Heart left ventricle (tissue), 16 donors: ENCODE measurements at regions of chr9 and their contacts with region 1.

Region 1: GRCh38 chr9:96449845-96450612 is at the start of gene HABP4:
- DNase-seq: peak; percentile 97 to 99 (median 98)
- ATAC-seq: peak; percentile 99 to 100 (median 99)
- H3K4me3 ChIP-seq: peak within 1 kb of the TSS; percentile 53 to 95 (median 82)
- H3K27ac ChIP-seq: peak within 1 kb of the TSS; percentile 52 to 93 (median 82)
- H3K4me1 ChIP-seq: peaks cover 0 to 30% (median 13%) of the 10 kb centered on the region in 12 donors
- H3K27me3 ChIP-seq: peaks cover 0 to 8% (median 0%) of the 10 kb centered on the region in 9 donors
- CTCF ChIP-seq: peak in 5 of 12 donors; percentile 7 to 36 (median 14)
- POLR2A ChIP-seq: peak; percentile 82 to 92
- total RNA-seq, gene HABP4: 17.8 to 35.7 (median 25.9) TPM

Region 2: DNA sequence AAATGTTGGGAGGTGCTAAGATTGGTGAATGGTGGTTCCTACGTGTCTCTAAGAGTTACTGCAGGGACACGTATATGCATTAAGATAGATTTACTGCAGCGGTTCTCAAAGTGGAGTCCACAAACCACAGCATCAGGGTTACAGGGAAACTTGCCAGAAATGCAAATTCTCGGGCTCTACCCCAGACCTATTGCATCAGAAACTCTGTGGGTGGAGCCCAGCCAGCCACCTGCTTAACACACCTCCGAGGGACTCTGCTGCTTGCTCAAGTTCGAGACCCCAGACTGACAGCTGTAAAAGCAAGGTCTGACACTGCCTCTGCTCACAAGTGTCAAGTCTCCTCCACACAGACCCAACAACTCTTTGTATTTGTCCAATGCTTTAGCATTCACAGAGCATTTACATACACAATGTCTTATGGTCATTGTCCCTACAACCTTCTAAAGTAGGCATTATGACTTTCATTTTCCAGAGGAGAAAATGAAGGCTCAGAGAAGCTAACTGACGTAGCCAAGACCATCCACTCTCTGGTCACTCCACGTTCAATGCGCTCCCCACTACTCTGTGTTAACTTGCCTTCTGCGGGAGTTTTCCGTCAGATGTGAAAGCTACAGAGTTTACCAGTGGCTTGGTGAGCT is 196.9 kb before region 1 on chr9:
- intact Hi-C with region 1: no loop called
- DNase-seq: no peak
- ATAC-seq: no peak
- H3K4me3 ChIP-seq: no peak overlapping the region
- H3K27ac ChIP-seq: no peak overlapping the region
- H3K4me1 ChIP-seq: no peaks in the 10 kb centered on the region
- H3K27me3 ChIP-seq: no peaks in the 10 kb centered on the region
- CTCF ChIP-seq: no peak
- POLR2A ChIP-seq: no peak

Region 3: DNA sequence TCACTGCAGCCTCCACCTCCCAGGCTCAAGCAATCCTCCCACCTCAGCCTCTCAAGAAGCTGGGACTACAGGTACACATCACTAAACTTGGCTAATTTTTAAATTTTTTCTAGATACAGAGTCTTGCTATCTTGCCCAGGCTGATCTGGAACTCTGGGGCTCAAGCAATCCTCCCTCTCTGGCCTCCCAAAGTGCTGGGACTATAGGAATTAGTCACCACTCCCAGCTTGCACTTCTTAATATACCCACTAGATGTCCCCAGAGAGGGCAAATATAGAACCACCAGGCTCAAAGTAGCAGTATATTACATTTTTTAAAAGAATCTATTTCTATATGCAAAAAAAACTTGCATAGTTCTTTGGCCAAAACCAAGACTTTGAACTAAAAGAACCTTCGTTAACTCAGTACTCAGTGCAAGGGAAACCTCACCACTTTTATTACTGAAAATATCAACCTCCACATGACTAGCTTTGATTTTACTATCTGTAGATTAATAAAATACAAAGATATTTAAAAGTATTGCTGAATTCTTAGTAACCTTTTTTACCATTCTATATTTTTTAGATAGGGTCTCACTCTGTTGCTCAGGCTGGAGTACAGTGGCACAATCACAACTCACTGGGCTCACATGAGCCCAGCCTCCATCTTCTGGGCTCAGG is 122.2 kb before region 1 on chr9:
- intact Hi-C with region 1: loop called in 1 of 10 experiments (anchors 10 kb)
- DNase-seq: peak in 1 of 5 donors; percentile 24
- ATAC-seq: peak; percentile 40 to 83 (median 68)
- H3K4me3 ChIP-seq: no peak overlapping the region
- H3K27ac ChIP-seq: no peak overlapping the region
- H3K4me1 ChIP-seq: peaks cover 0 to 5% (median 0%) of the 10 kb centered on the region in 12 donors
- H3K27me3 ChIP-seq: no peaks in the 10 kb centered on the region
- CTCF ChIP-seq: peak; percentile 77 to 89 (median 85)
- POLR2A ChIP-seq: no peak

Region 4: GRCh38 chr9:96363175-96363967 is 86.7 kb before region 1 on chr9:
- intact Hi-C with region 1: no loop called
- DNase-seq: no peak
- ATAC-seq: no peak
- H3K4me3 ChIP-seq: no peak overlapping the region
- H3K27ac ChIP-seq: no peak overlapping the region
- H3K4me1 ChIP-seq: no peaks in the 10 kb centered on the region
- H3K27me3 ChIP-seq: no peaks in the 10 kb centered on the region
- CTCF ChIP-seq: no peak
- POLR2A ChIP-seq: no peak

Region 5: DNA sequence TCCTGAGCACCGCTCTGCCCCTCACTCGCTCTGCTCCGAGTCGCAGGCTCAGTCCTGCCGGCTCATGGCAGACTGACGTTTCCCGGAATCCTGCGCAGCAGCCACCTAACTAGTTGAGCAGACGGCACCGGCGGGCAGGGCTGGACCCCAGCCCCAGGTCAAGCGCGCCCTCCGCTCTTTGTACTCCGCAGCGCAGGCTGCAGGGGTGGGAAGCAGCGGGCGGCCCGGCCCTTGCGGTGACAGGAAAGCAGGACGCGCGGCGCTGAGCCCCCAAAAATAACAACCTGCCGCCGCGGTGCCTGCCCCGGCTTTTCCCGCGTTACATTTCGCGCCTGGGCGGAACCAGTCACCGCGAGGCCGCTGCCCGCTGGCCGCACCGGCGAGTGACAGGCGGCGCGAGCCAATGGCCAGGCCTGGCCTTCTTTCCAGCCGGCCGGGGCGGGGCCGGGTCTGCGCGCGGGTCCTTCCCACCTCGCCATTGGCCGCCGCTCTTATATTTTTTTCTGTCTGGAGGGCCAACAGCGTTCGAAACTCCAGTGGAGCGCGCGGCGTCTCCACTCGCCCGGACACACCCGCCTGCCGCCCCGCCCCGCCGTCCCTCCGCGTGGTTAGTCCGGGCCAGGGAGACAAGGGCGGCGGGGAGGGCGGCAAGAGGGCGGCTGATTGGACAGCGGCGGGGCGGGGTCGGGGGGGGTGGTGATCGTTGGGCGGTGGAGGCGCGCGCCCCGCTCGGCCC is 31.8 kb before region 1 on chr9 and contains the start of gene ZNF367:
- intact Hi-C with region 1: loop called in 7 of 10 experiments (anchors 1 to 5 kb)
- DNase-seq: peak; percentile 98 to 99 (median 99)
- ATAC-seq: peak; percentile 91 to 93 (median 93)
- H3K4me3 ChIP-seq: peak within 1 kb of the TSS; percentile 54 to 97 (median 83)
- H3K27ac ChIP-seq: peak within 1 kb of the TSS; percentile 99 to 100 (median 100)
- H3K4me1 ChIP-seq: peaks cover 6 to 51% (median 29%) of the 10 kb centered on the region in 12 donors
- H3K27me3 ChIP-seq: no peaks in the 10 kb centered on the region
- CTCF ChIP-seq: no peak
- POLR2A ChIP-seq: no peak
- total RNA-seq, gene ZNF367: 2.4 to 5.9 (median 3.2) TPM

Region 6: GRCh38 chr9:96566498-96567207 is 116.6 kb after region 1 on chr9:
- intact Hi-C with region 1: loop called in 4 of 10 experiments (anchors 2 to 10 kb)
- DNase-seq: peak; percentile 77 to 90 (median 85)
- ATAC-seq: peak; percentile 76 to 93 (median 91)
- H3K4me3 ChIP-seq: peak overlapping the region; percentile 55 to 89 (median 80)
- H3K27ac ChIP-seq: peak overlapping the region; percentile 75 to 96 (median 90)
- H3K4me1 ChIP-seq: peaks cover 0 to 39% (median 20%) of the 10 kb centered on the region in 12 donors
- H3K27me3 ChIP-seq: no peaks in the 10 kb centered on the region
- CTCF ChIP-seq: peak; percentile 59 to 90 (median 71)
- POLR2A ChIP-seq: peak in 1 of 2 donors; percentile 27

Region 7: DNA sequence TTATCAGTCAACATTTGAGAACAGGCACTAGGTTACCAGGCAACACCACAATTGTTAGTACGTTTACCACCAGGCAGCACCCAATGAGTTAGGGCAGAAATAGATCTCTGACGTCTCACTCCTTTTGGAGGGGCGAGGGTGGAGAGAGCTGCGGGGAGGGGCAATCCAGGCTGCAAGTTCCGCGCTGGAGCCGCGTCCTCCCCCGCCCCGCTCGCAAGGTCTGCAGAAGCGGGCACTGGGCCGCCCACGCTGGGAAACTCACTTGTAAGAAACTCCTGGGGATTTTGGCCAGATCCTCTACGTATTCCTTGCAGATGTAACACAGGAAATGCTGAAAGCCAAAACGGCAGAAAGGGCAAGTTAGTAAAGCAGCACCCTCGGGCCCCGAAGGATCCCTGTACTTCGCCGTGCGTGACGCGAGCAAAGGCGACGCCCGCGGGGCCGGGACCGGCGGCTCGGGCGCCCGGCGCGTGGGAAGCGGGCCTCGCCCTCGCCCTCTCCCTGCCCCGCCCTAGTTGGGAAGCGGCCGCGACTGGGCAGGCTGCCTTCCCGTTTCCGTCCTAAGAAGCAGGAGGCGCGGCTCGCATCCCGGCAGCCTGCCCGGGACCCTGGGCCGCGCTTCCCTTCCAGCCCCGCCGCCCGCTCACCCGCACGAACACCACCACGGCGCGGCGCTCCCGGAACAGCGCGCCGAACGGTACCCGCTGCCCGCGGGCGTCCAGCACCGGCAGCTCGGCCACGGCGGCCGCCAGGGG is 204.6 kb after region 1 on chr9:
- intact Hi-C with region 1: loop called in 5 of 10 experiments (anchors 1 to 10 kb)
- DNase-seq: peak; percentile 89 to 94 (median 91)
- ATAC-seq: peak; percentile 93 to 95 (median 94)
- H3K4me3 ChIP-seq: peak overlapping the region; percentile 47 to 91 (median 67)
- H3K27ac ChIP-seq: peak overlapping the region; percentile 88 to 99 (median 98)
- H3K4me1 ChIP-seq: peaks cover 0 to 38% (median 13%) of the 10 kb centered on the region in 12 donors
- H3K27me3 ChIP-seq: no peaks in the 10 kb centered on the region
- CTCF ChIP-seq: peak in 4 of 12 donors; percentile 0 to 39 (median 18)
- POLR2A ChIP-seq: peak in 1 of 2 donors; percentile 47

Region 8: DNA sequence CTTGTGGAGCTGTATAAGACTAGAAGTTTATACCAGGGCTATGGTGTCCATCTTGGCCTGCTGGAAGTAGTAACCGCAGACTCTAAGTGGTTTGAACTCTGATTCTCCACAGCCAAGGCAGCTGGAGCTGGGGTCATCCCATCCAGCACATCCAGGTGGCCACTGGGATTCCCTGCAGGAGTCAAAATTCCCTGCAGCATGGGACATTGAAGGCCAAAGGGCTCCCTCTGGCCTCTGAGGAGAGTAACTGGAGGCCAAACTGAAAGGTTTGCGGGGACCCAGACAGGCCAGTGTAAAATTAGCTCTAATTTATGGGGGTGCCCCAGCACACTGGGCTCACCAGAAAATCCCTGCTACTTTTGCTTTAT is 217.3 kb after region 1 on chr9:
- intact Hi-C with region 1: loop called in 4 of 10 experiments (anchors 5 to 10 kb)
- DNase-seq: no peak
- ATAC-seq: no peak
- H3K4me3 ChIP-seq: no peak overlapping the region
- H3K27ac ChIP-seq: no peak overlapping the region
- H3K4me1 ChIP-seq: peaks cover 0 to 5% (median 0%) of the 10 kb centered on the region in 12 donors
- H3K27me3 ChIP-seq: no peaks in the 10 kb centered on the region
- CTCF ChIP-seq: no peak
- POLR2A ChIP-seq: no peak